ENCODE measurements at regions of chr19 and their contacts with region 1.

Region 1: GRCh38 chr19:41449079-41449864 is 6.3 kb downstream of the ERICH4 start:
- DNase-seq: no peak
- H3K4me3 ChIP-seq: peak overlapping the region; percentile 43
- CTCF ChIP-seq: peak; percentile 99

Region 2: GRCh38 chr19:41427647-41428480 is 21.4 kb before region 1 on chr19:
- CTCF ChIA-PET with region 1: interaction called, 13 read pairs
- POLR2A ChIA-PET with region 1: no interaction called
- DNase-seq: no peak
- H3K4me3 ChIP-seq: peak overlapping the region; percentile 58
- CTCF ChIP-seq: no peak

Region 3: DNA sequence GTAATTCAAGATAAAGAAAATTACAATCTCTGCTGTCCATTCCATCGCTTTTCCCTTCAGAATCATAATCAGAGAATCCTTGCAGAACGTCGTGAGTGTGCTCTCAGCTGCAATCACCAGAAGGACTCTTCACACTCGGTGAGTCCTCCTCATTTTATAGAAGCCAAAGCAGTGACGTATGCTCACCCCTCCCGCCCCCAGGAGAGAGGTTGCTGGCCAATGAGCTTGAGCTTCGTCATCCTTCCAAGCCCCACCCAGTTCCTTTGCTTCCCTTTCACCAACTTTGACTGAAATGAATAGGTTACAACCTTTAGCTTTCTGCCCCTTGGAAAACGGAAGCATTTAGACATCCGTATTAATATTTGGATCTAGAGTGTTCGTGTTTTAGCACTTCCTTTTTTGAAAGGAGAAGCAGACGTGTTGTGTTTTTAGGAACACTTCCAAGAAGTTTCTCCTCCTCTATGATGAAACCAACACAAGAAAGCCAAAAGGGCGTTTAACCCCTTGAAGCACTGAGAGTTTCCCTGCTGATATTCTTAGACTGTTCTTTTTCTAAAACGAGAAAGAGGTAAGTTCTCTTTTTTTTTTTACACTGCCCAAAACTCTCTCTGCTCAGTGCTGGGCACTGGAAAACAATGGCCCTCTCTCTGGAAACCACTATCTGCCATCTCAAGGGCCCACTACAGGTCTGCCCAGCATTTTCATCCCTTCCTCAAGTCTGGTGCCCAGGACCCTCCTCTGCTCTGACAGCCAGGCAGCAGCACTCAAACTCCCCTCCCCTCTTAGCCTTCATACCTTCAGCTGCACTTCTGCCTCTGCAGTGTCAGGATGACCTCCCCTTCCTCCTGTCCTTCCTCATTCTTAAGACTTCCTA is 82.4 kb after region 1 on chr19:
- CTCF ChIA-PET with region 1: interaction called, 48 read pairs
- POLR2A ChIA-PET with region 1: no interaction called
- DNase-seq: no peak
- H3K4me3 ChIP-seq: no peak overlapping the region; the same call in 1 of the 2 replicates
- CTCF ChIP-seq: no peak

Region 4: DNA sequence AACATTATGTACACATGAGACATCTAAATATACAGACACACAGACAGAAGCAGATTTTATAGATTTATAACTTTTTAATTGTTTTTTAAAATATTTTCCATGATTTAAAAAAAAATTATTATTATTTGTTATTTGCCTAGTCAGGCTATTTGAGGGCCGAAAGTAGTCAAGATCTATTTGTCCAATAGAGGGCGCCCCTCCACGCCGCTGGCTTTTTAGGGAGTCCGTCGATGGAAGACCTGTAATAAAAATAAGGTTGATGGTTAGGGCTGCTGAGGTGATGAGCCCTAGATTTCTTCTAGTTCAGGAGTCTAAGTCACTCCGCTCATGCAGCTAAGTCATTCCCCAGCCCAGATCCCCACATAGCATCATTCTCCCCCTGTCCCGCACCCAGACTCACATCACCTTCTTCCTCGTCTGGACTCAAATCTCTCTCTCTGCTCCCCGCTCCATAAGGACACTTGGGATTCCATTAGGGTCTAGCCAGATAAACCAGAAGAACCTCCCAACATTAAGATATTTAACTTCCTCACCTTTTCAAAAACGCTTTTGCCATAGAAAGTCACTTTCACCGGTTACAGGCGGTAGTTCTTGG is 92.8 kb after region 1 on chr19:
- CTCF ChIA-PET with region 1: interaction called, 48 read pairs
- POLR2A ChIA-PET with region 1: no interaction called
- DNase-seq: no peak
- H3K4me3 ChIP-seq: no peak overlapping the region
- CTCF ChIP-seq: peak; percentile 24

Region 5: DNA sequence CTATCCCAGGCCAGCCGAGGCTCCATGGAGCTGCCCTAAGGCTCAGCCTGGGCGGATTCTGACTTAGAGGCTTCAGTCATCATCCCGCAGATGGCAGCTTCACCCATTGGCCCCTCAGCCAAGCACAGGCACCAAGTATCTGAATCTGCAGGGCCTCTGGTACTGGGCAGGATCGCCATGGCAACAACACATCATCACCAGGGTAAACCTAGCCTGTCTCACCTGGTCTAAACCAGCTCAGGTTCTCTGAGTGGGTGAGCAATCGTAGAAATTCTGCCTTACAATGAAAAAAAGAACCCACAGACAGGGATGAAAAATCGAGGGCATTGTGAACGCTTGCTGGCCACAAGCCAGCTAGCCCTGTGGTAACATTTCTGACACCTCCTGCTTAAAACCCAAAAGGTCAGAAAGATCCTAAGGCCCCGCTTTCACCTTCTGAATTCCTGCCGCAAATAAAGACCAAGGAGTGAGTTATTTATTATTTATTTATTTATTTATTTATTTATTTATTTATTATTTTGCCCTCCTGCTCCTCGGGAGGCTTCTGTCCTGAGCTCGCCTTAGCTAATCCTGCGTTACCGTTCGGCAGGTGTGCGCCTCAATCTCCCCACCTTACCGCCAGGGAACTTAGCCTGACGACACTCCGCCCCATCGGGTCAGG is 114.7 kb after region 1 on chr19:
- CTCF ChIA-PET with region 1: interaction called, 255 read pairs
- POLR2A ChIA-PET with region 1: no interaction called
- DNase-seq: no peak
- H3K4me3 ChIP-seq: no peak overlapping the region
- CTCF ChIP-seq: no peak

Region 6: GRCh38 chr19:41570639-41571112 is 121.4 kb after region 1 on chr19:
- CTCF ChIA-PET with region 1: interaction called, 255 read pairs
- POLR2A ChIA-PET with region 1: no interaction called
- DNase-seq: no peak
- H3K4me3 ChIP-seq: no peak overlapping the region
- CTCF ChIP-seq: peak; percentile 91

Region 7: DNA sequence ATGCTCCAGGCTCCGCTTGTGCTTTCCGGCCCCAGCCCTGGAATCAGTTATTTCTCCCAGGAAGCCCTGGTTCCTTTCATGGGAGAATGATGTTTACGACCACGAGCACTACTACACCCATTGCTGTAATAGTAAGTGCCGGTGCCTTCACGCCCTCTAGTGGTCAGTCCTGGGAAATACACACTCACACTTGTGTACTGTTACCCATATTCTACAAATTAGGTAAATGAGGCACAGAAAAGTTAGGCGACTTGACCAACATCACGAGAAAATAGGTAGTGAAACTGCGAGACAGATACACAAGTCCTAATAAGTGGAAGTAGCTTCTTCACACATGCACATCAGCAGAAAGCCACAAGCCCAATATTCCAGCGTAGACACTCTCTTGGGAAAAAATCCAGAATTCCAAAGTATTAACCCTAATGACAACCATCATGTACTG is 148.3 kb after region 1 on chr19:
- CTCF ChIA-PET with region 1: interaction called, 10 read pairs
- POLR2A ChIA-PET with region 1: no interaction called
- DNase-seq: peak; percentile 10
- H3K4me3 ChIP-seq: no peak overlapping the region
- CTCF ChIP-seq: peak; percentile 86

Measured in AG04449 (cell line).